B cell (primary cell): ENCODE measurements at regions of chr6 and their contacts with region 1.

Region 1: DNA sequence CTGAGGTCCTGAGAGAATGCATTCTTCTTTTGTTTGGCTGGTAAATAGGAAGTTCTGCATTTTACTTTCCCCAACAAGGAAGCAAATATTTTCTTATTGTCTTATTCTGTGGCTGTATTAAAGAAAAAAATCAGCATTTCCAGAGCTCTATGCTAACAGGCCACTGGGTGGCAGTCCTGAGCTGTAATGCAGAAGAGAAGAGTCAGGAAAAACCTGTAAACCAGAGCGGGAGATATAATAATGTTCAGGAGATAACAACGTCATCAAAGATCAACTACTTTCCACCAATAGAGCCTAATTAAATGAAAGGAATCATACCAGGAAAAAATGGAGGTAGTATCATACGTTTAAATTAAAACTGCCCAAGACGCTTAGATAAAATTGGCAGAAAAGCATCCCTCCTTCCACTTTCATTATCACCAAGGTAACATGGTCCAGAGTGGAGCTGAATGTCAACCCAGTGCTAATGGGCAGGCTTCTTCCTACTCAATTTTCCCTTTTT is 55.6 kb upstream of the CARMIL1 start:
- DNase-seq: peak; percentile 74
- ATAC-seq: peak; percentile 49
- H3K4me3 ChIP-seq: peak overlapping the region in 3 of 5 experiments; percentile 1 to 50 (median 24)
- H3K4me3 Mint-ChIP-seq: peak overlapping the region; percentile 42
- H3K27ac ChIP-seq: no peak overlapping the region
- H3K27ac Mint-ChIP-seq: no peak overlapping the region
- H3K4me1 ChIP-seq: peaks cover 0 to 3% of the 10 kb centered on the region in 2 donors
- H3K4me1 Mint-ChIP-seq: peaks cover 7% of the 10 kb centered on the region
- H3K27me3 ChIP-seq: peaks cover 0 to 3% (median 0%) of the 10 kb centered on the region in 4 experiments
- H3K27me3 Mint-ChIP-seq: peaks cover 13% of the 10 kb centered on the region
- CTCF ChIP-seq: peak; percentile 98

Region 2: DNA sequence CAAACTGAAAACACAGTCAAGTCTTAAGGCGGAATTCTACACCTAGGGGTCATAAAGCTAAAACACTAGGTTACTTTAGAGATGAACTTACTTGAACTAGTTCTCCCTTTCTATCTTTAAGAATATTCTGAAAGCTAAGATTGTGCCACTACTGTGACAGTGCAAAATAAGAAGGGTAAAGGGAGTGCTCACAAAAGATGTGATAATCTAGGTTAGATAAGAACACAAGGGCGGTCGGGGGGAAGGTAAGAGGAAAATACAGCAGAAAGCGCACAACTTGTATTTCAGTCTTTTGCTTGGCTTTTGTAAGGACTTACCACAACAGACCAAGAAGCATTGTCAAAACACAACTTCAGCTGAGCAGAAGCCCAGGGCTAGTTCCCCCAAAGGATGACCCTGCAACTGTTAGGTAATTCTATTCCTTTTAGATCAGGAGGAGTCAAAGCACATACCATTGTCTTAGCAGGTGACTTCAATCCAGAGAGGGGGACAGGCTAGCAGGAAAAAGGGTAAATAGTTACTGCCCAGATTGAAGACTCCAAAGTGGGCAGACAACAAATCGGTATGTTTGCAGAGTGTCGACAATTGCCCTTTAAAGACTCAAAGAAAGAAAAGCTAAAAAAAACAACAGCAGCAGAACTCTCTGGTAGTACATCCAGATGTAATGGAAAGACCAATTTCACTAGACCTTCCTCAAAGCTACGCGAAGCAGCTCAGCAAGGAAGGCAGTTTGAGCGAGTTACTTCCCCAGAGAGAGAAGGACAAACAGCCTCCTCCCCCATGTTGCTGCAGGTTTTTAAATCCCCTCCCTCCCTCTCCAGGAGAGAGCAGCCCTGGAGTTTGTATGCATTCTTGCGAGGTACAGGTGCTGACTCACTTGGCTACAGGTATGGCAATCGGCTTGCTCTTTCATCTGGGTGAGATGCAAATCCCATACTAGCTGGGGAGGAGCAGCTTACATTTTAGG is 346.8 kb before region 1 on chr6:
- CTCF ChIA-PET with region 1: no interaction called
- POLR2A ChIA-PET with region 1: no interaction called
- intact Hi-C with region 1: no loop called
- DNase-seq: no peak
- ATAC-seq: no peak
- H3K4me3 ChIP-seq: no peak overlapping the region
- H3K4me3 Mint-ChIP-seq: no peak overlapping the region
- H3K27ac ChIP-seq: peak overlapping the region in 1 of 2 donors; percentile 70
- H3K27ac Mint-ChIP-seq: peak overlapping the region; percentile 23
- H3K4me1 ChIP-seq: peaks cover 28 to 29% of the 10 kb centered on the region in 2 donors
- H3K4me1 Mint-ChIP-seq: peaks cover 64% of the 10 kb centered on the region
- H3K27me3 ChIP-seq: no peaks in the 10 kb centered on the region
- H3K27me3 Mint-ChIP-seq: no peaks in the 10 kb centered on the region
- CTCF ChIP-seq: no peak

Region 3: DNA sequence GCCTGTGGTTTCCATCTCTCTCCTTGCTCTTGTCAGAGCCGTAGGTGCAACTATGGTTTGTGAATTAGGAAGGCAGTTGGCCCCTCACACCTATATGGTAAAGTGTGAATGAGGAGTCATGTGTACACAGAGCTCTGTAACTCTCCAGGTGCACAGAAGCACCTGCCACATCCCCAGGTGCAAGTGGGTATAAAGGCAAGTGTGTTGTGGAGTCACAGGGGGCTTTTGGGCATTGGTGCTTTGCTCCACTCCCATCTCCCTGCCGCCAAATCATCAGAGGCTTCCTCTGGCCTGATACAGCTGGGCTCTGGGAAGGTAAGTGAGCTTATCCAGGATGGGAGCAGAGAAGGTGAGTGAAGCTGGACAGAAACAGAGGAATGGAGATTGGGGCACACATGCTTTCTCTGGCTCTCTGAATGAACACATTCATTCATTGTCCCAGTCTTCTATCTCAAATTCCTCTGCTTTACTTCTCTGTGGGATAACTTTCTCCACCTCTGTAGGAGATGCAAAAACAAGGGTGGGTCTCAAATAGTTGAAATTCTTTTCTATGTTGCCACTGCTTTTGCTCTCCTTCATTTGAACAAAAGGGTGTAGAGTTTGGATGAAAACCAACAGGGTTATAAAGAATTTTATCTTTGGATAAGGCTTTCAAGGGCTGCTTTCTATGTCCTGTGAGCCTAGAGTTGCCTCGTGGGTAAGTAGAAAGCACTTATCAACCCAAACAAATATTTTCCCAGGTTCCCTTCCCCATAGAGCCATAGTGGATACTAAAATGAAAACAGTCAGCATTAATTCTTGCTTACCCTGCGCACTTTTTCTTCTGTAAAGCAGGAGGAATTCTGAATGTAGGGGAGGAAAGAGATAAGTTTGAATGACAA is 242.8 kb before region 1 on chr6:
- CTCF ChIA-PET with region 1: no interaction called
- POLR2A ChIA-PET with region 1: no interaction called
- intact Hi-C with region 1: no loop called
- DNase-seq: no peak
- ATAC-seq: no peak
- H3K4me3 ChIP-seq: no peak overlapping the region
- H3K4me3 Mint-ChIP-seq: no peak overlapping the region
- H3K27ac ChIP-seq: no peak overlapping the region
- H3K27ac Mint-ChIP-seq: peak overlapping the region; percentile 71
- H3K4me1 ChIP-seq: peaks cover 13 to 25% of the 10 kb centered on the region in 2 donors
- H3K4me1 Mint-ChIP-seq: peaks cover 54% of the 10 kb centered on the region
- H3K27me3 ChIP-seq: no peaks in the 10 kb centered on the region
- H3K27me3 Mint-ChIP-seq: no peaks in the 10 kb centered on the region
- CTCF ChIP-seq: no peak

Region 4: GRCh38 chr6:25601800-25602673 is 378.5 kb after region 1 on chr6:
- CTCF ChIA-PET with region 1: interaction called, 36 read pairs
- POLR2A ChIA-PET with region 1: no interaction called
- intact Hi-C with region 1: loop called (anchors 1 kb)
- DNase-seq: peak; percentile 62
- ATAC-seq: no peak
- H3K4me3 ChIP-seq: no peak overlapping the region
- H3K4me3 Mint-ChIP-seq: no peak overlapping the region
- H3K27ac ChIP-seq: no peak overlapping the region
- H3K27ac Mint-ChIP-seq: no peak overlapping the region
- H3K4me1 ChIP-seq: no peaks in the 10 kb centered on the region
- H3K4me1 Mint-ChIP-seq: no peaks in the 10 kb centered on the region
- H3K27me3 ChIP-seq: no peaks in the 10 kb centered on the region
- H3K27me3 Mint-ChIP-seq: peaks cover 8% of the 10 kb centered on the region
- CTCF ChIP-seq: peak; percentile 89

Region 5: GRCh38 chr6:25717866-25718740 is 494.6 kb after region 1 on chr6:
- CTCF ChIA-PET with region 1: interaction called, 13 read pairs
- POLR2A ChIA-PET with region 1: no interaction called
- intact Hi-C with region 1: no loop called
- DNase-seq: peak; percentile 51
- ATAC-seq: no peak
- H3K4me3 ChIP-seq: no peak overlapping the region
- H3K4me3 Mint-ChIP-seq: no peak overlapping the region
- H3K27ac ChIP-seq: no peak overlapping the region
- H3K27ac Mint-ChIP-seq: no peak overlapping the region
- H3K4me1 ChIP-seq: no peaks in the 10 kb centered on the region
- H3K4me1 Mint-ChIP-seq: no peaks in the 10 kb centered on the region
- H3K27me3 ChIP-seq: no peaks in the 10 kb centered on the region
- H3K27me3 Mint-ChIP-seq: peaks cover 12% of the 10 kb centered on the region
- CTCF ChIP-seq: peak; percentile 79

Region 6: DNA sequence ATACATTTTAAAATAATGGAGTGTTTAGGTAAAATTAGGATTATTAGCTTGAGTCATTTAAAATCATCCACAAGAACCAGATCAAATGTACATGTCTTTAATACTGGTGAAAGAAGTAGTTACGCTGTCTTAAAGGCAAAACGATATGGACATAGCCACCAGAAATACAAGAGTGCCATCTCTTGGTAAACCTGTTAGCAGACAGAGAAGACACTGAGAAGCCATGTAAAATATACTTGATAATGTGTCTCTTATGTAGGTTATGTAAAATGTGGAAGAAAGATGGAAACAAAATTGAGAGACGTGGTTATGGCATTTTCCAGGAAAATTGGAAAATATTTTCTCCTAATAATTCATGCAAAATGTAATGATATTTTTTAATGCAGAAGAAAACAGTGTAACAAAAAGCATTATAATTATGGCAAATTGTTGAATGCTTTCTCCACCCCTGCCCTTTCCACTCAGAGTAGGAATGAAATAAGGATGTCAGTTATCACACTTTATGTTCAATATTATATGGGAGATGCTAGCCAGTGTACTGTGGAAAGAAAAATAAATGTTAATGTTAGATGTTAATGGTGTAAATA is 719.1 kb after region 1 on chr6:
- CTCF ChIA-PET with region 1: interaction called, 6 read pairs
- POLR2A ChIA-PET with region 1: no interaction called
- intact Hi-C with region 1: loop called (anchors 10 kb)
- DNase-seq: peak; percentile 65
- ATAC-seq: peak; percentile 47
- H3K4me3 ChIP-seq: no peak overlapping the region
- H3K4me3 Mint-ChIP-seq: no peak overlapping the region
- H3K27ac ChIP-seq: no peak overlapping the region
- H3K27ac Mint-ChIP-seq: no peak overlapping the region
- H3K4me1 ChIP-seq: no peaks in the 10 kb centered on the region
- H3K4me1 Mint-ChIP-seq: peaks cover 10% of the 10 kb centered on the region
- H3K27me3 ChIP-seq: no peaks in the 10 kb centered on the region
- H3K27me3 Mint-ChIP-seq: peaks cover 4% of the 10 kb centered on the region
- CTCF ChIP-seq: peak; percentile 70